Mammary epithelial cell (primary cell): ENCODE measurements at regions of chr7 and their contacts with region 1.

Region 1: GRCh38 chr7:101077303-101078089 is 7.8 kb upstream of the TRIM56 start:
- DNase-seq: peak; percentile 82
- H3K4me3 ChIP-seq: no peak overlapping the region
- H3K27ac ChIP-seq: no peak overlapping the region
- H3K4me1 ChIP-seq: no peaks in the 10 kb centered on the region
- H3K27me3 ChIP-seq: peaks cover 2% of the 10 kb centered on the region
- CTCF ChIP-seq: peak; percentile 86 to 98

Region 2: DNA sequence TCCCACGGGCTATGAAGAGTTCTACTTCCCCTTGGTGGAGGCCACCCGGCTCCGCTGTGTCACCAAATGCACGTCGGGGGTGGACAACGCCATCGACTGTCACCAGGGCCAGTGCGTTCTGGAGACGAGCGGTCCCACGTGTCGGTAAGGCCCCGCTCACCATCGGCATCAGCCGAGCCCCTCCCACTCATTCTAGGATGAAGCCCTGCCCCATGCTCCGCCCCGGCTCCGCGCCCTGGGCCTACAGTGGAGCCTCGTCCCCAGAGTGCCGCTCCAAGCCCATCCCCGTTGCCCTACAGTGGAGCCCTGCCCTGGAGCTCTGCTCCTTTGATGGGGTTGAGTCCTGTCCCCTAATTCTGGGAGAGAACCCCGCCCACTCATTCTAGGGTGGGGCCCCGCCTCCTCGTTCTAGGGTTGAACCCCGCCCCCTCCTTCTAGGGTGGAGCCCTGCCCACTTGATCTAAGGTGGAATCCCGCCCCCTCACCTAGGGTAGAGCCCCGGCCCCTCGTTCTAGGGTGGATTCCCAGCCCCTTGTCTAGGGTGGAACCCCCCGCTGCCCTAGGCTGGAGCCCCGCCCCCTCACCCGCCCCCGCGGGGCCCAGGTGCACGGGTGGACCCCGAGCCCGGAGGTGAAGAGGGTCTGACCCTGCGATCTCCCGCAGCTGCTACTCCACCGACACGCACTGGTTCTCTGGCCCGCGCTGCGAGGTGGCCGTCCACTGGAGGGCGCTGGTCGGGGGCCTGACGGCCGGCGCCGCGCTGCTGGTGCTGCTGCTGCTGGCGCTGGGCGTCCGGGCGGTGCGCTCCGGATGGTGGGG is 111.6 kb before region 1 on chr7:
- CTCF ChIA-PET with region 1: interaction called, 4 read pairs
- dilution Hi-C with region 1: no loop called
- in situ Hi-C with region 1: no loop called
- intact Hi-C with region 1: loop called (anchors 1 kb)
- DNase-seq: peak; percentile 74
- H3K4me3 ChIP-seq: peak overlapping the region in 2 of 3 experiments; percentile 23 to 34
- H3K27ac ChIP-seq: no peak overlapping the region
- H3K4me1 ChIP-seq: peaks cover 7% of the 10 kb centered on the region
- H3K27me3 ChIP-seq: peaks cover 17% of the 10 kb centered on the region
- CTCF ChIP-seq: peak; percentile 82 to 86

Region 3: GRCh38 chr7:101185258-101185839 is 107.9 kb after region 1 on chr7:
- CTCF ChIA-PET with region 1: no interaction called
- dilution Hi-C with region 1: no loop called
- in situ Hi-C with region 1: no loop called
- intact Hi-C with region 1: loop called (anchors 5 kb)
- DNase-seq: peak; percentile 43
- H3K4me3 ChIP-seq: no peak overlapping the region
- H3K27ac ChIP-seq: no peak overlapping the region
- H3K4me1 ChIP-seq: no peaks in the 10 kb centered on the region
- H3K27me3 ChIP-seq: peaks cover 5% of the 10 kb centered on the region
- CTCF ChIP-seq: no peak

Region 4: GRCh38 chr7:101217388-101218235 is 140.1 kb after region 1 on chr7 and contains the starts of genes PLOD3 and ZNHIT1:
- CTCF ChIA-PET with region 1: no interaction called
- dilution Hi-C with region 1: no loop called
- in situ Hi-C with region 1: no loop called
- intact Hi-C with region 1: no loop called
- DNase-seq: peak; percentile 96
- H3K4me3 ChIP-seq: peak within 1 kb of the TSS; percentile 76 to 89 (median 78)
- H3K27ac ChIP-seq: peak within 1 kb of the TSS; percentile 89
- H3K4me1 ChIP-seq: peaks cover 19% of the 10 kb centered on the region
- H3K27me3 ChIP-seq: no peaks in the 10 kb centered on the region
- CTCF ChIP-seq: peak in 1 of 2 donors; percentile 23
- total RNA-seq, gene PLOD3: 84.9 to 133 TPM
- total RNA-seq, gene ZNHIT1: 61.3 to 70.2 TPM

Region 5: GRCh38 chr7:101251871-101252659 is 174.6 kb after region 1 on chr7:
- CTCF ChIA-PET with region 1: interaction called, 12 read pairs
- dilution Hi-C with region 1: no loop called
- in situ Hi-C with region 1: no loop called
- intact Hi-C with region 1: no loop called
- DNase-seq: peak; percentile 98
- H3K4me3 ChIP-seq: peak overlapping the region; percentile 61 to 98 (median 91)
- H3K27ac ChIP-seq: peak overlapping the region; percentile 64
- H3K4me1 ChIP-seq: peaks cover 11% of the 10 kb centered on the region
- H3K27me3 ChIP-seq: no peaks in the 10 kb centered on the region
- CTCF ChIP-seq: no peak

Region 6: GRCh38 chr7:101287032-101287431 is 209.5 kb after region 1 on chr7:
- CTCF ChIA-PET with region 1: no interaction called
- dilution Hi-C with region 1: no loop called
- in situ Hi-C with region 1: no loop called
- intact Hi-C with region 1: loop called (anchors 5 kb)
- DNase-seq: no peak
- H3K4me3 ChIP-seq: no peak overlapping the region
- H3K27ac ChIP-seq: no peak overlapping the region
- H3K4me1 ChIP-seq: no peaks in the 10 kb centered on the region
- H3K27me3 ChIP-seq: peaks cover 2% of the 10 kb centered on the region
- CTCF ChIP-seq: no peak